ENCODE measurements at regions of chr19 and their contacts with region 1.

Region 1: DNA sequence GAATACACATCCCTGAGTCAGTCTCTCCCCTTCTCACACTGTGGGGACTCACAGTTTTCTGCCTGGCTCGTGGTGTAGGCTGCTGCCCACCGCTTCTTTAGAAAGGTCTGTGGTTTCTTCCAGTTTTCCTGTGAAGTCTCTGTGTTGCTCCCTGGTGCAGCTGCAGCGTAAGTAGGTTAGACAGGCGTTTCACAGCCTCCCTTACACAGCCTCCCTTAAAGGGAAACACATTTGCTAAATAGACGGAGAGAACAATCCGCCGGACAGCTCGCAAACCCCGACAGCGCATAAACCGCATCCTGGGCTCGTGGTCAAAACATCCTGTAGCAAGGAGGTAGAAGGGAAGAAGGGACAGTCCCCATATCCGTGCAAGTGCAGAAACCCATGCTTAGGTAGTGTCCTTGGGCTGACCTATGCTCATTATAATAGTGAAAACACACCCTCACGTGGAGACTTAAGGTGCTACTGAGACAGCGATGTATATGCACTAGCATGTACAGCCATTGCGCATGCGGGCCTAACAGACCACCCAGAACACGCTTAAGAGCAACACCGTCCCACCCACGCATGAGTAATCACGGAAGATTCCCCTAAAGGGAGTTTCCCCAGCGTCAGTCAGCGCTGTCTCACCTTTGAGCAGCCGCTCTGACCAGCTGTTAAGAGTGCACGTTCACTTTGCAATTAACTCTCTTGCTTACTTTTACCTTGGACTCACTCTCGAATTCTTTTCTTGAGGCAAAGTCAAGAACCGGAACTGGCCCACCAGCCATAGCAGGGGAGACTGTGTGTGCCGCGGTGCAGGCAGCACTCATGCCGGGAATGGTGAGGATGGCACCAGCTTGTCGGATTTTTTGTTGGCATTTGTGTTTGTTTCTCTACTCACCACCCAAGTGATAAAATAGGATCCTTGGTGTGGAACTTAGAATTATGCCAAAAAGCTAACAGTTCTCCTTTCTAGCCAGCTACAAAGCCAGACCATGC is 16.6 kb downstream of the SIGLEC8 start:
- DNase-seq: peak; percentile 52 to 86 (median 80)
- H3K4me3 ChIP-seq: peak overlapping the region in 6 of 7 experiments; percentile 21 to 79 (median 52)
- H3K27ac ChIP-seq: peak overlapping the region in 1 of 2 experiments; percentile 65
- H3K4me1 ChIP-seq: peaks cover 5 to 26% (median 23%) of the 10 kb centered on the region in 4 experiments
- H3K27me3 ChIP-seq: peaks cover 0 to 2% (median 0%) of the 10 kb centered on the region in 5 experiments

Region 2: DNA sequence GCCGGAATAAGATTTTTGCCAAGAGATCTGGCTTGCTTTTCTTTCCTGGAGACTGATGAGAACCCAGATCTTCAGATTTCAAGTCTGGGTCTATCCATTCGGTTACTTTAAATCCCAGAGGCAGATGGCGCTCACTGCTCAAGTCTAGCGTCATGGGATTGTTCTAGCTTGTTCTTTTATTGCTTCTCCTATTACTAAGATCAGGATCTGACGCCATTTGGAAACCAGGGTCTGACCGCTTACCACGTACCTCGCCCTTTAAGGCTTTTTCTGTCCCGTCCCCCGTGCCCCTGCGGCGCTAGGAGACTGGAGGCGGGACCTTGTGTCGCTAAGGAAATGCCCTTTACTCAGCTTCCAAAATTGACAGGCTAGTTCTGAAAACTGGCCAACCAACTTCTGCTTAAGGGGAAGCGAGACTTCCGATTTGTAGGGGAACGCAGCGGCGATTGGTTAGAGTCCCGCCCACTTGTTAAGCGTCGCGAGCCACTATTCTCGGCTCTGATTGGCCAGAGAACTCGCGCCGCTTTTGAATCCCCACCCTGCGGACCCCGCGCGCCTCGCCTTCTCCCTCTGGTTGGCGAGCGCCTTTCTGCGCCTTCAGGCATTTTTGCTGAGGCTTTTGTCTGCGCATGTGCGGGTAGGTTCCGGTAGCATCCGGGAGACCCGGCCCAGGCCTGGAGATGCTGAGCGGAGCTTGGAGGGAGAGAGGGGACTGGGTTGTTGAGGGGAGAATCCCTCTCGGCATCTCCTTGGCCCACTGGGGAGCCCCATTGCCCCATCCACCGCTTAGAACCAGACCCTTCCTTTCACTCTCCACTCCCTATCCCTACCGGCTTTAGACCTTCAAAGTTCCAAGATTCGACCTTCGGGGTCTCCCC is 47.5 kb before region 1 on chr19:
- CTCF ChIA-PET with region 1: interaction called, 40 read pairs
- POLR2A ChIA-PET with region 1: no interaction called
- DNase-seq: peak; percentile 98 to 99 (median 99)
- H3K4me3 ChIP-seq: peak overlapping the region; percentile 25 to 81 (median 66)
- H3K27ac ChIP-seq: peak overlapping the region; percentile 51 to 85
- H3K4me1 ChIP-seq: peaks cover 0 to 28% (median 24%) of the 10 kb centered on the region in 4 experiments
- H3K27me3 ChIP-seq: no peaks in the 10 kb centered on the region

Region 3: DNA sequence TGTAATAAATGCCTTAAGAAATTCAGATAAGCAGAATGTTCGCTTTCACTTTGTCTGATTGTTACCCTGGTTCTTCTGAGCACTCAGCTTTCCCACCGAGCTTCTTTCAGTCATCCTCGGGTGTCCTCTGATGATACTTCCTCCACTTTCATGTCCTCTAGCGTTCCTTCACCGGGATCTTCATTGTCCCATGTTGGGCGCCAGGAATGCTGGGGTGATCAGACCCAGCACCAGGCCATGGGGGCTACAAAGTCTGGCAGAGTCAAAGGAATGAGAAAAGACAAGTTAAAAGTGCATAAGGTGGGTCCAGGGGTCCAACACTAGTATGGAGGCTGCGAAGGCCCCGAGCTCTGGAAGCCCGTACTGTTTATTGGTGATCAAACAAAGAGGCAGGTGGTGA is 39.6 kb before region 1 on chr19:
- CTCF ChIA-PET with region 1: interaction called, 40 read pairs
- POLR2A ChIA-PET with region 1: no interaction called
- DNase-seq: no peak
- H3K4me3 ChIP-seq: no peak overlapping the region
- H3K27ac ChIP-seq: no peak overlapping the region
- H3K4me1 ChIP-seq: peaks cover 0 to 7% (median 3%) of the 10 kb centered on the region in 4 experiments
- H3K27me3 ChIP-seq: no peaks in the 10 kb centered on the region

Region 4: GRCh38 chr19:51407511-51408131 is 34.1 kb before region 1 on chr19:
- CTCF ChIA-PET with region 1: interaction called, 15 read pairs
- POLR2A ChIA-PET with region 1: no interaction called
- DNase-seq: peak; percentile 42 to 85 (median 84)
- H3K4me3 ChIP-seq: peak overlapping the region in 1 of 7 experiments; percentile 16
- H3K27ac ChIP-seq: no peak overlapping the region
- H3K4me1 ChIP-seq: peaks cover 12 to 34% (median 32%) of the 10 kb centered on the region in 4 experiments
- H3K27me3 ChIP-seq: no peaks in the 10 kb centered on the region

Region 5: DNA sequence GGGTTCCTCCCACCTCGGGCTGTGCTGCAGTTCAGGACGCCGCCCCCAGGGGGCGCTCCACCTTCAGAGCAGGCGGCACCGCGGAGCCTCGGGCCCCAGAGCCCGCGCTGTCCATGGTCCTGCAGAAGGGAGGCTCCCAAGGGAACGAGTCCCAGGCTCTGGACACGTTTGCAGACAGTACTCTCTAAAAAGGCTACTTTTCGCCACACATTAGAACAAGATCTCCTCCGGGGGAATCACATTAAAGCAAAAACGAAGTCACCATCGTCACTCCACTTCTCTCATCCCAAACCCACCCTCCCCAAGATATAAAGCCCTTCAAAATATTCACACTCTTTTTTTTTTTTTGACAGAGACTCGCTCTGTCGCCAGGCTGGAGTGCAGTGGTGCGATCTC is 19.6 kb before region 1 on chr19:
- CTCF ChIA-PET with region 1: interaction called, 21 read pairs
- POLR2A ChIA-PET with region 1: interaction called, 7 read pairs
- DNase-seq: peak; percentile 75 to 82 (median 79)
- H3K4me3 ChIP-seq: peak overlapping the region in 3 of 7 experiments; percentile 33 to 48 (median 36)
- H3K27ac ChIP-seq: no peak overlapping the region
- H3K4me1 ChIP-seq: peaks cover 3 to 47% (median 33%) of the 10 kb centered on the region in 4 experiments
- H3K27me3 ChIP-seq: peaks cover 0 to 3% (median 0%) of the 10 kb centered on the region in 5 experiments

Region 6: DNA sequence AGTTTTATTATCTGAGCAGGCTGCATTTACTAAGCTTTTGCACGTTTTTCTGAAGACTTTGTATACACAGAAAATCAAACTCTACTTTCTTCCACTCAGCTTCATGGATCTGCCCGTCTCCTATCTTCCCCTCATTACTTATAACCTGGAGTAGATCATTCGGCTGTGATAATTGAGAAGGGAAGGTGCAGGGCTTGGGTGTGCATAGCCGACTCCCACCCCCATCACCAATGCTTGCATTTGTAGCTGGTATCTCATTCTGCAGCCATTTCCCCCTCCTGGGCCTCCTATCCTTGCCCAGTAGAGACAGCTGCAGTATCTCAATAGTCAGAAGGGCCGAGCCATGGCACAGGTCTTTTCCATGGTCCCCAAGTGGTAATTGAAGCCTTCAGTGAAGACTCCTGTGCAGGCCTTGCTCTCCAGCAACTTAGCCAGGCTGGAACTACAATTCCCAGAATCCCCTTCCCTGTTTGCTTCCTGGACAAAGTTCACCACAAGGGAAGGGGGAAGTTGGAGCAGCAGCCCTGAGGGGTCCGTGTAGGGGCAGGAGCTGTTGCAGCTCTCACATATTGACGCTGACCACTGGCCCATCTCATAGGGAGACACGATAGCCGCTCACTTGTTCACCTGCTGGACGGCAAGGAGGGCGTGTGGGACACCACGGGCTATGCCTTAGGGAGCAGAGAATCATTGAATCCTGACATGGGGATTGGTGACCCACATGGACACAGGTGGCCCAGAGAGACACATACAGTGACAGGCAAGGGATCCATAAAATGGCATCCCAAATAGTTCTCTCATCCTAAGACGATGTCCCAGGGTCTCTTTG is 18.7 kb after region 1 on chr19:
- CTCF ChIA-PET with region 1: interaction called, 10 read pairs
- POLR2A ChIA-PET with region 1: interaction called, 4 read pairs
- DNase-seq: peak; percentile 57 to 80 (median 71)
- H3K4me3 ChIP-seq: peak overlapping the region in 6 of 7 experiments; percentile 25 to 80 (median 52)
- H3K27ac ChIP-seq: no peak overlapping the region
- H3K4me1 ChIP-seq: peaks cover 8 to 59% (median 36%) of the 10 kb centered on the region in 4 experiments
- H3K27me3 ChIP-seq: no peaks in the 10 kb centered on the region

Region 7: DNA sequence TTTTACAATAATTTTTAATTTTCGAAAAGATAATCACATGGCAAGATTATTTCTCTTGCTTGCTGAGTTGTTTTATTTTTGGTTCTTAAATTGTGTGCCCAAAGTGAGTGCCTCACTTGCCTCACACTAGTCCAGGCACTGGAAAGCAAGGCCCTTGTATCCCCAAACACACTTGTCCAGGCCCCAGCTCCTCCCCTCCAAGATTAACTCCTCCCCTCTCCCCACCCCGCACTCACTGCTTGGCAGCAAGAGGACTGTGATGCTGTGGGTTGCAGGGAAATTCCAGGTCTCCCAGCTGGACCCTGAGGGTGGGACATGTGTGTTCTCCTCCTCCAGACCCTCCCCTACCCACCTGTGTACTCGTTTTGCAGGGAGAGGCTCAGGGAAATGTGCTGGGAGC is 56.0 kb after region 1 on chr19:
- CTCF ChIA-PET with region 1: no interaction called
- POLR2A ChIA-PET with region 1: no interaction called
- DNase-seq: no peak
- H3K4me3 ChIP-seq: no peak overlapping the region
- H3K27ac ChIP-seq: no peak overlapping the region
- H3K4me1 ChIP-seq: peaks cover 1 to 38% (median 29%) of the 10 kb centered on the region in 4 experiments
- H3K27me3 ChIP-seq: no peaks in the 10 kb centered on the region

Region 8: DNA sequence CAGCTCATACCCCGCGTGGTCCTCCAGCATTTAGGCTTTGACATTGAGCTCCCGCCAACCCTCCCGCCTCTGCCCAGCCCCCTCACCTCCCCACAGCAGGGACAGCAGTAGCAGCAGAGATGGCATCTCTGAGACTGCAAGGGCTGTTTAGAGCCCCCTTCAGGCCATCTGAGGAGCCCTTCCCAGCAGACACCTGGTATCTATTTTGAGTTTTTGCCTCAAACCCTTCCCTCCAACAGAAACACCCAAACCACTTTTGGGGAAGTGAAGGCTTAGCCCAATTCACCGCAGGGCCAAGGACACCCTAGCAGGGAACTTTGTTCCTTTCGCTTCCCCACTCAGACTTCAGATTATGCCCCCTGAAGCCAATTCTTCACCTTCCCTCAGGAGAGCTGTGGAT is 123.1 kb after region 1 on chr19:
- CTCF ChIA-PET with region 1: no interaction called
- POLR2A ChIA-PET with region 1: no interaction called
- DNase-seq: peak; percentile 49 to 85 (median 83)
- H3K4me3 ChIP-seq: peak overlapping the region in 2 of 7 experiments; percentile 25 to 47
- H3K27ac ChIP-seq: no peak overlapping the region
- H3K4me1 ChIP-seq: peaks cover 4 to 36% (median 17%) of the 10 kb centered on the region in 4 experiments
- H3K27me3 ChIP-seq: peaks cover 2 to 29% (median 4%) of the 10 kb centered on the region in 5 experiments